ENCODE measurements at regions of chr19 and their contacts with region 1.

Region 1: DNA sequence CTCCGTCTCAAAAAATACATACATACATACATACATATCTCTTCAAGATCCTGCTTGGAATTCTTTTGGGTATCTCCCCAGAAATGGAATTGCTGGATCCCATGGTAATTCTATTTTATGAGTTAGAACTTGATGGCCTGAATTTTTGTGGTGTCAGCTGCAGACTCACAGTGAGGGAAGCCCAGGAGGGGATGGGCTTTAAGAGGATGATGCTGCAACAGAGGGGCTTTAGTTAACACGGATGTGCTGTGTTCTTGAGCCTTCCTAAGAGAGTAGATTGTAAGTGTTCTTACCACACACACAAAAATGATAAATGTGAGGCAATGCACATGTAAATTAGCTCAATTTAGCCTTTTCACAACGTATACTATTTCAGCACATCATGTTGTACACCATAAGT is 31.8 kb downstream of the CACNG6 start:
- DNase-seq: no peak
- H3K4me3 ChIP-seq: no peak overlapping the region
- H3K27ac ChIP-seq: no peak overlapping the region
- H3K4me1 ChIP-seq: peaks cover 0 to 6% (median 3%) of the 10 kb centered on the region in 4 experiments; a peak in 4 of 7 replicates
- H3K27me3 ChIP-seq: peaks cover 0 to 2% (median 0%) of the 10 kb centered on the region in 4 experiments; a peak in 1 of 7 replicates
- CTCF ChIP-seq: no peak
- EP300 ChIP-seq: no peak
- POLR2A ChIP-seq: no peak
- RAD21 ChIP-seq: no peak

Region 2: GRCh38 chr19:53808710-53809125 is 214.5 kb before region 1 on chr19:
- CTCF ChIA-PET with region 1: interaction called, 42 read pairs
- POLR2A ChIA-PET with region 1: no interaction called
- DNase-seq: no peak
- H3K4me3 ChIP-seq: no peak overlapping the region
- H3K27ac ChIP-seq: no peak overlapping the region
- H3K4me1 ChIP-seq: no peaks in the 10 kb centered on the region; a peak in 1 of 7 replicates
- H3K27me3 ChIP-seq: peaks cover 0 to 5% (median 1%) of the 10 kb centered on the region in 4 experiments; a peak in 4 of 7 replicates
- CTCF ChIP-seq: peak in 2 of 3 experiments; percentile 68 to 77; a peak in 3 of 4 replicates
- EP300 ChIP-seq: no peak
- POLR2A ChIP-seq: no peak
- RAD21 ChIP-seq: peak; percentile 84 to 87

Region 3: DNA sequence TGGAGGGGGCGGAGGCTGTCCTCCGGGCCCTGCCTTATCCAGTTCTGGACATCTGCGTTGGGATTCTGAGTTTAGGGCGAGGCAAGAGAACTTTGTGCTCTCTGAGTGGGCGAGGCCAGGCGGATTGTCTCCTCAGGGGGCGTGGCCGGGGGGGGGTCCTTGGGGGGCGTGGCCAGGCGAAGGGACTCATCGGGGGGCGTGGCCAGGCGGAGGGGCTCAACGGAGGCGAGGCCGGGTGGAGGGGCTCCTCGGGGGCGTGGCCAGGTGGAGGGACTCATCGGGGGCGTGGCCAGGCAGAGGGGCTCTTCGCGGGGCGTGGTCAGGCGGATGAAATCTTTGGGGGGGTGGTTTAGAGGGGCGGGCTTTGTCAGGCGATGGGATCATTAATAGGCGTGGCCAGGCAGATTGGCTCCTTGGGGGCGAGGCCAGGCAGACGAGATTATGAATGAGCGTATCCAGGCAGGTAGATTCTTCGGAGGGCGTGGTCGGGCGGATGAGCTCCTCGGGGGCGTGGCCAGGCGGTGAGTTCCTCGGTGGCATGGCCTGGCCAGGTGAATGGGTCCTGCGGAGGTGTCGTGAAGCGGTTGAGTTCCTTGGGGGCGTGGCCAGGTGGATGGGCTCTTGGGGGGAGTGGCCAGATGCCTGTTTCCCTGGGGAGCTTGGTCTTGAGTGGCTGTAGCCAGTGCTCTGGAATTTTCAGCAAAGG is 124.4 kb before region 1 on chr19:
- CTCF ChIA-PET with region 1: interaction called, 11 read pairs
- POLR2A ChIA-PET with region 1: no interaction called
- DNase-seq: peak; percentile 99
- H3K4me3 ChIP-seq: peak overlapping the region; percentile 28 to 68 (median 56); a peak in 7 of 8 replicates
- H3K27ac ChIP-seq: no peak overlapping the region
- H3K4me1 ChIP-seq: peaks cover 0 to 14% (median 9%) of the 10 kb centered on the region in 4 experiments; a peak in 4 of 7 replicates
- H3K27me3 ChIP-seq: peaks cover 0 to 3% (median 0%) of the 10 kb centered on the region in 4 experiments; a peak in 1 of 7 replicates
- CTCF ChIP-seq: no peak
- EP300 ChIP-seq: no peak
- POLR2A ChIP-seq: no peak
- RAD21 ChIP-seq: no peak

Region 4: DNA sequence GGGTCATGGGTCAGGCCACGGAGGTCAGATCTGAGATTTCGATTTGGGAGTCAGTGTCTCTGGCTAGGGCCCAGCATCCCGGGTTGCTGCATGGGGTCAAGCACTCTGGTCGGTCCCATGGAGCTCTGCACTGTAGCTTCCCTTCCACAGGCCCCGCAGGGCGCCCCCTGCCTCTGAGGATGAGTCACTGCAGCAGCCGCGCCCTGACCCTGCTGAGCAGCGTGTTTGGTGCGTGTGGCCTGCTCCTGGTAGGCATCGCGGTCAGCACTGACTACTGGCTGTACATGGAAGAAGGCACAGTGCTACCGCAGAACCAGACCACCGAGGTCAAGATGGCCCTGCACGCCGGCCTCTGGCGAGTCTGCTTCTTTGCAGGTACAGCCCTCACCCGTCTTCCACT is 110.5 kb before region 1 on chr19:
- CTCF ChIA-PET with region 1: interaction called, 32 read pairs
- POLR2A ChIA-PET with region 1: no interaction called
- DNase-seq: peak in 1 of 2 experiments; percentile 94
- H3K4me3 ChIP-seq: no peak overlapping the region
- H3K27ac ChIP-seq: no peak overlapping the region
- H3K4me1 ChIP-seq: peaks cover 0 to 8% (median 2%) of the 10 kb centered on the region in 4 experiments; a peak in 4 of 7 replicates
- H3K27me3 ChIP-seq: peaks cover 0 to 10% (median 5%) of the 10 kb centered on the region in 4 experiments; a peak in 5 of 7 replicates
- CTCF ChIP-seq: peak; percentile 87 to 97 (median 95)
- EP300 ChIP-seq: no peak
- POLR2A ChIP-seq: no peak
- RAD21 ChIP-seq: peak; percentile 61 to 70

Region 5: DNA sequence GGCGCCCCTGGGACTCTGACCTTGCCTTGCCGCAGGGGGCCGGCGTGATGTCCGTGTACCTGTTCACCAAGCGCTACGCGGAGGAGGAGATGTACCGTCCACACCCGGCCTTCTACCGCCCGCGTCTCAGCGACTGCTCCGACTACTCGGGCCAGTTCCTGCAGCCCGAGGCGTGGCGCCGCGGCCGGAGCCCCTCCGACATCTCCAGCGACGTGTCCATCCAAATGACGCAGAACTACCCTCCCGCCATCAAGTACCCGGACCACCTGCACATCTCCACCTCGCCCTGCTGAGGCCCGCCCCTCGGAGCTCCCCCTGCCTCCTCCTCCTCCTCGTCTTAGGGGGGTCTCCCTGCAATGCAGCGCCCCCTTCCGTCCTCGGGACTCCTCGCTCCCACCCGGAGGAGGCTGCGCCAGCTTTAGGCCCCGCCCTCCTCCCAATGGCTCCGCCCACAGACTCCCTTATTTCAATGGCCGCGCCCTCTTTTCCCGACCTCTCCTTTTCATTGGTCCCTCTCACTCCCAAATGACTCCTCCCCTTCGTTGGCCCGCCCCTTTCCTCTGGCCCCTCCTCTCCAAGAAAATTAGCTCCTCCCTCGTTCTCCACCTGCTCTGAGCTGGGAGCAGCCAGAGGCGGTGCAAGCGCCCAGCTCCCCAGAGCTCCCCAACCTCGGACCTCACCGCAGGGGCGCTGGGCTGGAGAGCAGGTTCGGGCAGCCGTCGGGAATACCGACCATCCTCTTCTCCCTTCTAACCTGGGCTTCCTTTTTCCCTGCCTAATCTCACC is 81.0 kb before region 1 on chr19:
- CTCF ChIA-PET with region 1: interaction called, 33 read pairs
- POLR2A ChIA-PET with region 1: interaction called, 3 read pairs
- DNase-seq: peak; percentile 97 to 100
- H3K4me3 ChIP-seq: peak overlapping the region; percentile 76 to 95 (median 88)
- H3K27ac ChIP-seq: peak overlapping the region; percentile 63; the same call in 1 of the 2 replicates
- H3K4me1 ChIP-seq: peaks cover 4 to 10% (median 7%) of the 10 kb centered on the region in 4 experiments; a peak in 6 of 7 replicates
- H3K27me3 ChIP-seq: no peaks in the 10 kb centered on the region
- CTCF ChIP-seq: peak; percentile 60 to 86 (median 82)
- EP300 ChIP-seq: no peak
- POLR2A ChIP-seq: peak; percentile 55 to 88
- RAD21 ChIP-seq: peak; percentile 46 to 65

Region 6: GRCh38 chr19:53982611-53983010 is 40.6 kb before region 1 on chr19:
- CTCF ChIA-PET with region 1: interaction called, 35 read pairs
- POLR2A ChIA-PET with region 1: interaction called, 17 read pairs
- DNase-seq: peak in 1 of 2 experiments; percentile 66
- H3K4me3 ChIP-seq: peak overlapping the region in 2 of 4 experiments; percentile 18 to 35; a peak in 3 of 8 replicates
- H3K27ac ChIP-seq: no peak overlapping the region
- H3K4me1 ChIP-seq: peaks cover 4 to 13% (median 9%) of the 10 kb centered on the region in 4 experiments
- H3K27me3 ChIP-seq: peaks cover 0 to 5% (median 2%) of the 10 kb centered on the region in 4 experiments; a peak in 3 of 7 replicates
- CTCF ChIP-seq: no peak
- EP300 ChIP-seq: no peak
- POLR2A ChIP-seq: no peak
- RAD21 ChIP-seq: no peak

Region 7: GRCh38 chr19:54230031-54230430 is 206.8 kb after region 1 on chr19:
- CTCF ChIA-PET with region 1: no interaction called
- POLR2A ChIA-PET with region 1: no interaction called
- DNase-seq: no peak
- H3K4me3 ChIP-seq: no peak overlapping the region
- H3K27ac ChIP-seq: no peak overlapping the region
- H3K4me1 ChIP-seq: no peaks in the 10 kb centered on the region
- H3K27me3 ChIP-seq: peaks cover 0 to 7% (median 2%) of the 10 kb centered on the region in 4 experiments; a peak in 3 of 7 replicates
- CTCF ChIP-seq: no peak
- EP300 ChIP-seq: no peak
- POLR2A ChIP-seq: no peak
- RAD21 ChIP-seq: no peak

Measured in H1 (cell line).